Activated CD4-positive, alpha-beta T cell treated with anti-CD3 and anti-CD28 coated beads for 36 hours (primary cell): ENCODE measurements at regions of chr1 and their contacts with region 1.

Region 1: GRCh38 chr1:154183045-154183915 is 8.6 kb downstream of the TPM3 start:
- DNase-seq: peak; percentile 98
- ATAC-seq: peak; percentile 72
- H3K4me3 Mint-ChIP-seq: peak overlapping the region; percentile 99
- H3K27ac Mint-ChIP-seq: peak overlapping the region; percentile 100
- H3K4me1 Mint-ChIP-seq: peaks cover 39% of the 10 kb centered on the region
- H3K27me3 Mint-ChIP-seq: no peaks in the 10 kb centered on the region

Region 2: DNA sequence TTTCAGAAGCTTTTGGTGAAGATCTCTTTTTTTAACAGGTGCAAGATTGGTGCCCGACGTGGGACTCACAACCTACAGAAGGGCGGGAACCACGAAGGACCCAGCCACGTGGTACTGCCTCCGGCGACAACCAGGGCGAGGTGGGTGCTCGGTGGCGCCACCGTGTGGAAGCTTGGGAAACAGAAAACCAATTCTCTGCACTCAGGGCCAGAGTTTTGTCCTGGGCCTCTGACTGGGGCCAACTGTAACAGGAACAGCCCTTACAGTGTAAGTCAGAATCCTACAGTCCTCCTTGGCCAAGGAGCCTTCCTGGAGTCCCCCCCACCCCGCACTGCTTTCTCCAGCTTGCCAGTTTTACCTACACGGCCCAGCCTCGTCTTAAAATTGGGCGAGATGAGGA is 778.5 kb before region 1 on chr1:
- CTCF ChIA-PET with region 1: no interaction called
- POLR2A ChIA-PET with region 1: no interaction called
- intact Hi-C with region 1: no loop called
- DNase-seq: peak; percentile 84
- ATAC-seq: peak; percentile 81
- H3K4me3 Mint-ChIP-seq: no peak overlapping the region
- H3K27ac Mint-ChIP-seq: no peak overlapping the region
- H3K4me1 Mint-ChIP-seq: peaks cover 12% of the 10 kb centered on the region
- H3K27me3 Mint-ChIP-seq: peaks cover 9% of the 10 kb centered on the region

Region 3: GRCh38 chr1:153805042-153805745 is 378.1 kb before region 1 on chr1:
- CTCF ChIA-PET with region 1: no interaction called
- POLR2A ChIA-PET with region 1: no interaction called
- intact Hi-C with region 1: loop called in 1 of 2 experiments (anchors 5 kb)
- DNase-seq: peak; percentile 87
- ATAC-seq: peak; percentile 98
- H3K4me3 Mint-ChIP-seq: peak overlapping the region; percentile 28
- H3K27ac Mint-ChIP-seq: peak overlapping the region; percentile 85
- H3K4me1 Mint-ChIP-seq: peaks cover 30% of the 10 kb centered on the region
- H3K27me3 Mint-ChIP-seq: no peaks in the 10 kb centered on the region

Region 4: DNA sequence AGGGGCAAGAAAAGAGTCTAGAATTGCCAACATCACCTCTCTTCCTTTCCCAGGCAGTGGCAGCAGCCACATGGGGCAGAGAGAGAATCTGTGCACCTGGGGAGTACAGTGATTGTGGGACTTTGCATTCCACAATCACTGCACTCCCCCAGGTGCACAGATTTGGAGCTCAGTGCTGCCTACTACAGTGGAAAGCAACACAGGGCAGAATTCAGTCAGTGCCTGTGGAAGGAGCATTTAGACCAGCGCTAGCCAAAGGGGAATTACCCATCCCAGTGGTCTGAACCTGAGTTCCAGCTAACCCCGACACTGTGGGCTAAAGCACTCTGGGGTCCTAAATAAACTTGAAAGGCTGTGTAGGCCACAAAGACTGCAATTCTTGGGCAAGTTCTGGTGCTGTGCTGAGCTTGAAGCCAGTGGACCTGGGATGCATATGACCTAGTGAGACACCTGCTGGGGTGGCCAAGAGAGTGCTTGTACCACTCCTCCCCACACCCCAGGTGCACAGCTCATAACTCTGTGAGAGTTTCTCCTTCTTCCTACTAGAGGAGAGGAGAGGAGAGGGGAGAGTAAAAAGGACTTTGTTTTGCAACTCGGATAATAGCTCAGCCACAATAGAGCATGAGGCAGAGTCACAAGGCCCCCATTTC is 78.7 kb before region 1 on chr1:
- CTCF ChIA-PET with region 1: no interaction called
- POLR2A ChIA-PET with region 1: no interaction called
- intact Hi-C with region 1: no loop called
- DNase-seq: no peak
- ATAC-seq: no peak
- H3K4me3 Mint-ChIP-seq: no peak overlapping the region
- H3K27ac Mint-ChIP-seq: no peak overlapping the region
- H3K4me1 Mint-ChIP-seq: no peaks in the 10 kb centered on the region
- H3K27me3 Mint-ChIP-seq: no peaks in the 10 kb centered on the region

Region 5: GRCh38 chr1:154198756-154199562 is 15.7 kb after region 1 on chr1:
- CTCF ChIA-PET with region 1: interaction called, 6 read pairs
- POLR2A ChIA-PET with region 1: no interaction called
- intact Hi-C with region 1: loop called in 1 of 2 experiments (anchors 1 kb)
- DNase-seq: peak; percentile 62
- ATAC-seq: peak; percentile 77
- H3K4me3 Mint-ChIP-seq: no peak overlapping the region
- H3K27ac Mint-ChIP-seq: no peak overlapping the region
- H3K4me1 Mint-ChIP-seq: no peaks in the 10 kb centered on the region
- H3K27me3 Mint-ChIP-seq: peaks cover 3% of the 10 kb centered on the region

Region 6: DNA sequence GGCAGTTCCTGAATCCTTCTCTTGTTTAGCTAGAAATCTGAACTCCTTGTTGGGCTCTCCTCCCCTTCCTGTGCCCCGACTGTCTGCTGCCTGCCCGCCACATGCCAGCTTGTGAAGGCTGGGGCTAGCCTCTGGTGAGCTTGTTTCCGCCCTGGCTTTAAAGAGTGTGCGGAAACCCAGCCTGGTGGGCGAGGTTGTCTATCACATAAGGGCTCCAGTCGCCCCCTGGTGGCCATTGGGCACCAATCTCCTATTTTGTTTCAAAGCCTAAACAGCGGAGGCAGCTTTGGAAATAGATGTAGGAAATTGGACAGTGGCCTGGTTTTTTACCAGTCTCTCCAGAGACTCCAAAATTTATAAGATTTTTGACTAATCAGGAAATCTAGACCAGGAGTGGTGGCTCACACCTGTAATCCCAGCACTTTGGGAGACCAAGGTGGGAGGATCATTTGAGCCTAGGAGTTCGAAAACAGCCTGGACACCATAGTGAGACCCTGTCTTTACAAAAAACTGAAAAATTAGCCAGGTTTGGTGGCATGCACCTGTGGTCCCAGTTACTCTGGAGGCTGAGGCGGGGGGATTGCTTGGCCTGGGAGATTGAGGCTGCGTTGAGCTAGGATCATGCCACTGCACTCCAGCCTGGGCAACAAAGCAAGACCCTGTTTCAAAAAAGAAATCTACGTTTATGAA is 151.9 kb after region 1 on chr1:
- CTCF ChIA-PET with region 1: interaction called, 6 read pairs
- POLR2A ChIA-PET with region 1: no interaction called
- intact Hi-C with region 1: loop called (anchors 1 to 5 kb)
- DNase-seq: peak; percentile 97
- ATAC-seq: peak; percentile 95
- H3K4me3 Mint-ChIP-seq: no peak overlapping the region
- H3K27ac Mint-ChIP-seq: peak overlapping the region; percentile 92
- H3K4me1 Mint-ChIP-seq: peaks cover 64% of the 10 kb centered on the region
- H3K27me3 Mint-ChIP-seq: no peaks in the 10 kb centered on the region

Region 7: DNA sequence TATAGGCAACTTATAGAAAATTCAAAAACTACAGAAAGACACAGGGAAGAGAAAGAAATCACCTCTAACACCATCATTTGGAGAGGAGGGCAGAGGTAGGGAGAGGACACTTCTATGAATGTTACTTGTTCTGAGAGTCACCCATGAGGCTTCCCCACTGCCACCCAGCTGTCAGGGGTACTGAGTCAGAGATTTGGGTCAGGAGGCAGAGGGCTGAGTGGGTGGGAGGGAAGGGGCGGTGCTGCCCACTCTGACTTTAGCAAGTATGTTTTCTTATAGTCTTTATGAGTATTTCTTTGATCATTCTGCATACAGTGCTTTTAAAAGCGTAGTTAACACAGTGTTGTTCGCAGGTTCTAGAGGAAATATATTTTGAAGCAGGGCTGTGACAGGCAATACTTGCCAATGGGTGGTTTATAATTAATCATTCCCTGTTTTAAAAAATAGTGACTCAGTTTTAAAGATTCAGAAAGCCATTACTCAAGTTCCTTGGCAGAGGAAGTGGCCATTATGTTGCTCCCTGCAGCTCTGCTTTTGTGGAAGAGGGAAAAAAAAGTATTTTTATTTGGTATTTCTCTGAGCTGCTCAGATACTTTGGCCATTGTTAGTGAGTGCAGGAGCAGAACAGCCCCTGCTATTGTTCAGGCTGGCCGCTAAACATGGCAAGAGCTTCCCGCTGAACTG is 240.2 kb after region 1 on chr1:
- CTCF ChIA-PET with region 1: no interaction called
- POLR2A ChIA-PET with region 1: no interaction called
- intact Hi-C with region 1: no loop called
- DNase-seq: peak; percentile 75
- ATAC-seq: peak; percentile 50
- H3K4me3 Mint-ChIP-seq: no peak overlapping the region
- H3K27ac Mint-ChIP-seq: peak overlapping the region; percentile 42
- H3K4me1 Mint-ChIP-seq: peaks cover 84% of the 10 kb centered on the region
- H3K27me3 Mint-ChIP-seq: no peaks in the 10 kb centered on the region

Region 8: DNA sequence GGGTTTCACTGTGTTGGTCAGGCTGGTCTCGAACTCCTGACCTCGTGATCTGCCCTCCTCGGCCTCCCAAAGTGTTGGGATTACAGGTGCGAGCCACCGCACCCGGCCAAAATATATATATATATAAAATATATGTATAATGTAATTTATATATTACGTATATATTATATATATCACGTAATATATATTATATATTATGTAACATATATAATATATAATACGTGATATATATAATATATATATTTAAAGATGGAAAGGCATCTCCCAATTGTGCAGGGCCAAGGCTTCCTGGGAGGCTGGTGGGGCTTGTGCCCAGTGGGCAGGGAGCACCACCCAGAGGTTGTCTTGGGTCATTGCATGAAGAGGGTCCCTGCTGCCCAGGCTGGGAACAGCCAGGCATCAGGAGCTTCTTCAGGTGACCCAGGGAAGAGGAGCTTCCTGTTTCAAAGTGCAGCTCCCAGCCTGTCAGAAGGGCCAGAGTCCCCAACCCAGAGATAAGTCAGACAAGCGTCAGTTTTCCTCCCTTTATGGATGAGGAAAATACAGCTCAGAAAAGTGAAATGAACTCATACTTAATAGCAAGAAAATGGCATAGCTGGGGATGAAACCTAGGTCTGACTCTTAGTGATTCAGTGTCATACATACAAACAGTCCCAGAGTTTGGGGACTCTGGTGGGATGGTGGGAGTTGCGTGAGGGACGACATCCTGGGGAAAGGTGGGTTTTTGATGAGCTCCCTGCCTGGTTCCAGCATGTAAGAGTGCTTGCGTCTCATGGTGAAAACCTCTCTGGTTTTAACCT is 363.2 kb after region 1 on chr1:
- CTCF ChIA-PET with region 1: no interaction called
- POLR2A ChIA-PET with region 1: no interaction called
- intact Hi-C with region 1: loop called in 1 of 2 experiments (anchors 5 kb)
- DNase-seq: peak; percentile 79
- ATAC-seq: peak; percentile 94
- H3K4me3 Mint-ChIP-seq: no peak overlapping the region
- H3K27ac Mint-ChIP-seq: no peak overlapping the region
- H3K4me1 Mint-ChIP-seq: peaks cover 9% of the 10 kb centered on the region
- H3K27me3 Mint-ChIP-seq: peaks cover 2% of the 10 kb centered on the region

Region 9: DNA sequence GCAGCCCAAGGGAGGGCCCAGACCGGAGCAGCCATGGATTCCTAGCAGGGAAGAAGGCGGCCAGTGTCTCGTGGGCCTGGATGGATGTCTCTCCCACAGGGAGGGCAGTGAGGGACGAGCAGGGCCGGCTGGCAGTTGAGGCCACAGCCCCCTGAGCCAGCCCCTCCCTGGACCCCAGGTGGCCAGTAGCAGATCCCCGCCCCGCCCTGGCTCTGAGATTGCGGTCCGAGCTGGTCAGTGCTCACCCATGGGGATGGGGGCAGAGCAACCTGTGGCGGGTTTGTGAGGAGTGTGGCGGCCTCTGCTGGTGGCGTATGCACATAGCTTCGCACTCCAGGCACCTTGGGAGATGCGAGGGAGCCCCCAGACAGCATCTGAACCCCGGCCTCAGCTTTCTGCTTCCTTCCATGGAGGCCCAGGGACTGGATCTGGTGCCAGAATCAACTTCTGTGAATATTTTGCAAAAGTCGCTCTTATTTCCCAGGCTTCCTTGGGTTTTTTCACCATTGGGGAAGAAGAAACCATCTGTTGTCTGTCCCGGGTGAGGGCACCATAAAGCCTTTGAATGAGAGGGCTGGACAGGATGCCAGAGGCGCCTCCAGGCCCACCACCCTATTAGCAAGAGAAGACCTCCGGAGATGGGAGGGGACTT is 695.2 kb after region 1 on chr1:
- CTCF ChIA-PET with region 1: no interaction called
- POLR2A ChIA-PET with region 1: no interaction called
- intact Hi-C with region 1: no loop called
- DNase-seq: peak; percentile 87
- ATAC-seq: peak; percentile 95
- H3K4me3 Mint-ChIP-seq: no peak overlapping the region
- H3K27ac Mint-ChIP-seq: no peak overlapping the region
- H3K4me1 Mint-ChIP-seq: peaks cover 10% of the 10 kb centered on the region
- H3K27me3 Mint-ChIP-seq: peaks cover 4% of the 10 kb centered on the region